Ovary (tissue), 10 donors: ENCODE measurements at regions of chr12 and their contacts with region 1.

Region 1: DNA sequence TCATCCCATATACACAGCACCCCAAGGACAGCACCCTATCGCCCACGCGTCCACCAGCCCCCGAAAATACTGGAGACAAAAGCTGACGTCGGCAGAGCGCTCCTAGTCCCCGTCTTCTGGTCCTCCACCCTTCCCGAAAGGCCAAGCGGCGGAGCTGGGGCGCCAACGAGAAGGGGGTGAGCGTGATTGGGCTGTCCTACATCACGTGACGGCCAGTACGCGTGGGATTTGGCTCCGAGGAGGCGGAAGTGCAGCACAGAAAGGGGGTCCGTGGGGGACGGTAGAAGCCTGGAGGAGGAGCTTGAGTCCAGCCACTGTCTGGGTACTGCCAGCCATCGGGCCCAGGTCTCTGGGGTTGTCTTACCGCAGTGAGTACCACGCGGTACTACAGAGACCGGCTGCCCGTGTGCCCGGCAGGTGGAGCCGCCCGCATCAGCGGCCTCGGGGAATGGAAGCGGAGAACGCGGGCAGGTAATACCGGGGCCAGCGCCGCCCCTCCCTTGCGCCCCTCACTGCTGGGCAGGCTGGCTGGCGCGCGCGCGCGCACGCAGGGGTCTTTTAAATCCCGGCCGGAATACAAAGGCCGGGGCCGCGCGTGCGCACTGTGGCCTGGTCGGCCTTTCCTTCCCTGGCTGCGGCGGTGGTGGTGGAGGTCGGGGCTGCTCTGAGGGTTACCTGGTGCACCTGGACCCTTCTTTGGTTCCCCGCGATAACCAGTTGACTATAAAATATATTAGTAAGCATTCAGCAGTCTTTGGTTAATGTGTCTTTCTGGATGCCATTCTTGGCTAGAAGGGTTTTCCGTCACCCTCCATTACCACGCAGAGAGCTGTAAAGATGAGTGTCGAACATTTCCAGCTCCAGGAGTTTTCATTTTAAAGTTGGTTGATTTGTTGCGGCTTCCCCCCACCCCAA is at the start of gene TDG:
- DNase-seq: peak; percentile 97 to 99 (median 98)
- H3K4me3 ChIP-seq: peak within 1 kb of the TSS; percentile 76
- H3K27ac ChIP-seq: peak within 1 kb of the TSS; percentile 81 to 94
- H3K4me1 ChIP-seq: peaks cover 9% of the 10 kb centered on the region
- H3K27me3 ChIP-seq: no peaks in the 10 kb centered on the region
- CTCF ChIP-seq: peak in 2 of 3 donors; percentile 7 to 17
- EP300 ChIP-seq: no peak
- POLR2A ChIP-seq: peak; percentile 93
- total RNA-seq, gene TDG: 13.7 to 24.2 (median 19.6) TPM

Region 2: DNA sequence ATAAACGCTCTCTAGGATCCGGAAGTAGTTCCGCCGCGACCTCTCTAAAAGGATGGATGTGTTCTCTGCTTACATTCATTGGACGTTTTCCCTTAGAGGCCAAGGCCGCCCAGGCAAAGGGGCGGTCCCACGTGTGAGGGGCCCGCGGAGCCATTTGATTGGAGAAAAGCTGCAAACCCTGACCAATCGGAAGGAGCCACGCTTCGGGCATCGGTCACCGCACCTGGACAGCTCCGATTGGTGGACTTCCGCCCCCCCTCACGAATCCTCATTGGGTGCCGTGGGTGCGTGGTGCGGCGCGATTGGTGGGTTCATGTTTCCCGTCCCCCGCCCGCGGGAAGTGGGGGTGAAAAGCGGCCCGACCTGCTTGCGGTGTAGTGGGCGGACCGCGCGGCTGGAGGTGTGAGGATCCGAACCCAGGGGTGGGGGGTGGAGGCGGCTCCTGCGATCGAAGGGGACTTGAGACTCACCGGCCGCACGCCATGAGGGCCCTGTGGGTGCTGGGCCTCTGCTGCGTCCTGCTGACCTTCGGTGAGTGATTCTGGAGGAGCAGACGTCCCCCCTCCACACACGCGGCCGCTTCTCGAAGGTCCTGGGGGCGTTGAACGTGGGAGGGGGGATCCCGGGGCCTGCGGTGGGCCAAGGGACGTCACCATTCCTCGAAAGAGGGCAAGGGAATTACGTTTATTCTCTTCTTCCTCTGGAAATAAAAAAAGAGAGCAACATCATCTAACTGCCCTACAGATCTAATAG is 35.6 kb before region 1 on chr12 and contains the start of gene HSP90B1:
- intact Hi-C with region 1: loop called in 1 of 4 experiments (anchors 5 kb)
- DNase-seq: peak; percentile 99 to 100 (median 99)
- H3K4me3 ChIP-seq: peak within 1 kb of the TSS; percentile 62
- H3K27ac ChIP-seq: peak within 1 kb of the TSS; percentile 89 to 99
- H3K4me1 ChIP-seq: peaks cover 3% of the 10 kb centered on the region
- H3K27me3 ChIP-seq: no peaks in the 10 kb centered on the region
- CTCF ChIP-seq: no peak
- EP300 ChIP-seq: no peak
- POLR2A ChIP-seq: peak; percentile 92
- total RNA-seq, gene HSP90B1: 217 to 777 (median 442) TPM

Region 3: DNA sequence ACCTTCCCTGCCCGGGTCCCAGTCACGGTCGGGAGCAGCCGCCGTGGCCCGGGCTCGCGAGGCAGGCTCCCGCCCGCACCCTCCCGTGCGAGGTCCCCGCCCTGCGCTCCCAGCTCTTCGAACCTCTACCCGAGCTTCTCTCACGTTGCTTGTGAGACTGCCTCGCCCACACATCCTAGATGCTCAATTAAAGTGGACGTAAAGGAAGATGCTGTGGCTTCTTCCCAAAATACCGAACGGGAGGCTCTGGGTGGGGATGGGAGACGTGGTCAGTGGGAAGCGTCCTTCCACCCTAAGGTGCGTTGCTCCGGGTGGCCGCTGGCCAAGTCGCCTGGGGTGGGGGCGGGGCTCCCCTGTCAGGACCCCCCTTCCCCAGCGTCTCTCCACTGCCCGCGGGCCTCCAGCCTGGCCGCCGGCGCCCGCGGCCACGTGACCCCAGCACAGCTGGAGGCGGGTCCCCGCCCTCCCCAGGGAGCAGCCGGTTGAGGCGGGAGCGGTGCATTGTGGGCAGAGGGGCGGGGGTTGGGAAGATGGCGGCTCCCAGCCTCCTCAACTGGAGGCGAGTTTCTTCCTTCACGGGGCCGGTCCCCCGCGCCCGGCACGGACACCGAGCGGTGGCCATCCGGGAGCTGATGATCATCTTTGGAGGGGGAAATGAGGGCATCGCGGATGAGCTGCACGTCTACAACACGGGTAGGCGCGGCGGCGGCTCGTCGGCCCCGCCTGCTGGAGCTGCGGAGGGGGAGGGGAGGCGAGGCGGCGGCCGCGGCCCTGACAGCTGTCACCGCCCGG is 98.4 kb after region 1 on chr12 and contains the start of gene HCFC2:
- intact Hi-C with region 1: loop called in 3 of 4 experiments (anchors 10 kb)
- DNase-seq: peak; percentile 90 to 94 (median 93)
- H3K4me3 ChIP-seq: peak within 1 kb of the TSS; percentile 82
- H3K27ac ChIP-seq: peak within 1 kb of the TSS; percentile 31 to 72
- H3K4me1 ChIP-seq: peaks cover 6% of the 10 kb centered on the region
- H3K27me3 ChIP-seq: no peaks in the 10 kb centered on the region
- CTCF ChIP-seq: no peak
- EP300 ChIP-seq: no peak
- POLR2A ChIP-seq: peak; percentile 59
- total RNA-seq, gene HCFC2: 17.2 to 24.6 (median 23.5) TPM

Region 4: GRCh38 chr12:104083769-104084475 is 118.1 kb after region 1 on chr12:
- intact Hi-C with region 1: no loop called
- DNase-seq: no peak
- H3K4me3 ChIP-seq: no peak overlapping the region
- H3K27ac ChIP-seq: no peak overlapping the region
- H3K4me1 ChIP-seq: no peaks in the 10 kb centered on the region
- H3K27me3 ChIP-seq: no peaks in the 10 kb centered on the region
- CTCF ChIP-seq: no peak
- EP300 ChIP-seq: no peak
- POLR2A ChIP-seq: no peak